ENCODE measurements at regions of chr18 and their contacts with region 1.

Region 1: GRCh38 chr18:74928194-74928978 is 280.6 kb downstream of the PTGR3 start:
- DNase-seq: no peak
- H3K4me3 ChIP-seq: no peak overlapping the region
- H3K27ac ChIP-seq: no peak overlapping the region
- H3K4me1 ChIP-seq: no peaks in the 10 kb centered on the region
- H3K27me3 ChIP-seq: no peaks in the 10 kb centered on the region
- CTCF ChIP-seq: no peak

Region 2: DNA sequence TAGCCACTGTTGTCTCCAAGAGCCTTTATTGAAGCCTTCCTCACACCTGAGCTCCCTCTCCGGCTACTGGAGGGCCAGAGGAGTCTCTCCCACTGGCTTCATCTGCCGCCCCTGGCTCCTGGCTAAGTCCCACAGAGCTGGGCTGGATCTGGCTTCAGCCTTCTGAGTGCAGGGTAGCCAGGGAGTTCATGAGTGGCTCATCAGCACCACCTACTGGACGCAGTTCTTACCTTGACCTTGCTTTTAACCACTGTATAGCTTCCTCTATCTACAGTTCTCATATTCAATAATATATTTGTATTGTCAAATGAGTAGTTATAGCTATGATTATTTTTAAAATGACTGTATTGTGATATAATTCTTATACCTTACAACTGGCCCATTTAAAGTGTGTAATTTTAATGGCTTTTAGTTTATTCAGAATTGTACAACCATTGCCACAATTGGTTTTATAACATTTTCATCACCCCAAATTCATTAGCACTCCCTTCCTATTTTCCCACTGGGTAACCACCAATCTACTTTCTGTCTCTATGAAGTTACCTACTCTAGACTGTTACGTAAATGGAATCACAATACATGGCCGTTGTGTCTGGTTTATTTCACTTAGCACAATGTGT is 376.3 kb before region 1 on chr18:
- CTCF ChIA-PET with region 1: no interaction called
- POLR2A ChIA-PET with region 1: no interaction called
- intact Hi-C with region 1: no loop called
- DNase-seq: peak; percentile 56 to 62
- H3K4me3 ChIP-seq: no peak overlapping the region
- H3K27ac ChIP-seq: no peak overlapping the region
- H3K4me1 ChIP-seq: 0 out of 2 replicates have a peak, but pooled peaks cover 2% of the 10 kb centered on the region
- H3K27me3 ChIP-seq: peaks cover 54% of the 10 kb centered on the region
- CTCF ChIP-seq: peak; percentile 95

Region 3: DNA sequence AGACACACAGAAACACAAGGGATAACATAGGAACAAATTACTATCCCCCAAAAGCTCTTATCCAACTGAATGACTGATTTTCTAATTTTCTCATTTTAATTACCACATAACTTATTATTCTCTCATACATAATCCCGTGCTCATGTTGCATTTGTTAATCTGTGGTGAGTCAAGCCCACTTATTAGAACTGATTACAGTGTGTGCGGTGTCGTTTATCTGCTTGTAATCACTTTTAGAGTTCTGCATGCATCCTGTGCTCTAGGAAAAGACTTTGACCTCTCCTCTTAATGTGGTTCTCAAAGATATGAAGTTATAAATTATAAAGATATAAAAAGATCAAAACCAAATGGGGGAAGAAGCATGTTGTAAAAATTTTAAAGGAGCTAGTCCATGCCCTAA is 364.4 kb before region 1 on chr18:
- CTCF ChIA-PET with region 1: interaction called, 14 read pairs
- POLR2A ChIA-PET with region 1: no interaction called
- intact Hi-C with region 1: no loop called
- DNase-seq: no peak
- H3K4me3 ChIP-seq: no peak overlapping the region
- H3K27ac ChIP-seq: no peak overlapping the region
- H3K4me1 ChIP-seq: no peaks in the 10 kb centered on the region
- H3K27me3 ChIP-seq: peaks cover 96% of the 10 kb centered on the region
- CTCF ChIP-seq: no peak

Region 4: DNA sequence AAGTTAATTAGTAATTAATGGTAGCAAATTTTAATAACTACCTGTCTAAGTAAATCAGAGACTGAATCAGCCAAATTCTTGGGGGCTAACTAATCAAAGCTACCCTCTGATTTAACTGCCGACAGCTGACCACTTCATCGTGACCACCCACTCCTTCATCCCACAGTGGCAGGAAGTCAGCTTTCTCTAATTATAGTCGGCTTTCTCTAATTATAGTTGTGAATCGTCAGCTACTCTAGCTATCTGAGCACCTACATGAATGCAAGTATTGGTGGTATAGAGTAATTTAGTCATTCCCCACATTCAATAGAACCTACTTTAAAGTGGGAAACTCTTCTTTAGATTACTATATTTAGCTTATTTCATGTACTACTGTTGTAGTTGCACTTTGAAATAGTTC is 95.1 kb after region 1 on chr18:
- CTCF ChIA-PET with region 1: no interaction called
- POLR2A ChIA-PET with region 1: no interaction called
- intact Hi-C with region 1: no loop called
- DNase-seq: no peak
- H3K4me3 ChIP-seq: no peak overlapping the region
- H3K27ac ChIP-seq: no peak overlapping the region
- H3K4me1 ChIP-seq: no peaks in the 10 kb centered on the region
- H3K27me3 ChIP-seq: no peaks in the 10 kb centered on the region
- CTCF ChIP-seq: no peak

Region 5: DNA sequence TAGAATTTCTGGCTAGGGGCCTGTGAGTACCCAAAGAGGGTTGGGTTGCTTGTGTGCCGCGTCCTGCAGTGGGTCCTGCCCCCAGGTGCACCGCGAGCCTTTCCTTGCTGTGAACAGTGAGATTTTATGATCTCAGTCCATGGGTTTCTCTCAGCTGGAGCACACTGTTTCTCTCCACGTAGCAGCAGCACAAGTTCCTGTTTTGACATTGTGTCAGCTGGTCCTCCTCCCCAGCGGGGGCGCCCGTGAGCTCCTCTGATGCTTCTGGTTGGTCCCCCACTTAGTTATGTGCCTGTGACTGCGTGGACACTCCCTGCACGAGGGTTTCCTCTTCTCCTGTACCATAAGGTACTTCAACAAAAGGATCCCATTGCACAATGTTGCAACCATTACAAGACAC is 312.0 kb after region 1 on chr18:
- CTCF ChIA-PET with region 1: no interaction called
- POLR2A ChIA-PET with region 1: no interaction called
- intact Hi-C with region 1: no loop called
- DNase-seq: no peak
- H3K4me3 ChIP-seq: no peak overlapping the region
- H3K27ac ChIP-seq: no peak overlapping the region
- H3K4me1 ChIP-seq: no peaks in the 10 kb centered on the region
- H3K27me3 ChIP-seq: no peaks in the 10 kb centered on the region
- CTCF ChIP-seq: no peak

Measured in PC-9 (cell line).